ENCODE measurements at regions of chr15 and their contacts with region 1.

Region 1: GRCh38 chr15:64067564-64068030 is 21.3 kb upstream of the DAPK2 start:
- DNase-seq: peak; percentile 84
- ATAC-seq: peak; percentile 91
- H3K4me3 Mint-ChIP-seq: peak overlapping the region; percentile 27; the same call in 1 of the 2 replicates
- H3K27ac Mint-ChIP-seq: no peak overlapping the region
- H3K4me1 Mint-ChIP-seq: 0 out of 2 replicates have a peak, but pooled peaks cover 4% of the 10 kb centered on the region
- H3K27me3 Mint-ChIP-seq: no peaks in the 10 kb centered on the region; the same call in 1 of the 2 replicates
- CTCF ChIP-seq: peak; percentile 64

Region 2: GRCh38 chr15:63466378-63467192 is 601.0 kb before region 1 on chr15:
- CTCF ChIA-PET with region 1: interaction called, 11 read pairs
- POLR2A ChIA-PET with region 1: no interaction called
- DNase-seq: peak; percentile 34
- ATAC-seq: peak; percentile 93
- H3K4me3 Mint-ChIP-seq: no peak overlapping the region
- H3K27ac Mint-ChIP-seq: no peak overlapping the region
- H3K4me1 Mint-ChIP-seq: peaks cover 5% of the 10 kb centered on the region
- H3K27me3 Mint-ChIP-seq: peaks cover 3% of the 10 kb centered on the region
- CTCF ChIP-seq: peak; percentile 34

Region 3: GRCh38 chr15:63610200-63610841 is 457.3 kb before region 1 on chr15:
- CTCF ChIA-PET with region 1: interaction called, 24 read pairs
- POLR2A ChIA-PET with region 1: no interaction called
- DNase-seq: peak; percentile 78
- ATAC-seq: peak; percentile 95
- H3K4me3 Mint-ChIP-seq: no peak overlapping the region
- H3K27ac Mint-ChIP-seq: peak overlapping the region; percentile 31; the same call in 1 of the 2 replicates
- H3K4me1 Mint-ChIP-seq: 0 out of 2 replicates have a peak, but pooled peaks cover 4% of the 10 kb centered on the region
- H3K27me3 Mint-ChIP-seq: no peaks in the 10 kb centered on the region
- CTCF ChIP-seq: peak; percentile 56

Region 4: GRCh38 chr15:64024172-64025050 is 43.2 kb before region 1 on chr15:
- CTCF ChIA-PET with region 1: interaction called, 12 read pairs
- POLR2A ChIA-PET with region 1: no interaction called
- DNase-seq: peak; percentile 29
- ATAC-seq: peak; percentile 73
- H3K4me3 Mint-ChIP-seq: no peak overlapping the region
- H3K27ac Mint-ChIP-seq: no peak overlapping the region
- H3K4me1 Mint-ChIP-seq: peaks cover 16% of the 10 kb centered on the region
- H3K27me3 Mint-ChIP-seq: no peaks in the 10 kb centered on the region
- CTCF ChIP-seq: no peak

Region 5: DNA sequence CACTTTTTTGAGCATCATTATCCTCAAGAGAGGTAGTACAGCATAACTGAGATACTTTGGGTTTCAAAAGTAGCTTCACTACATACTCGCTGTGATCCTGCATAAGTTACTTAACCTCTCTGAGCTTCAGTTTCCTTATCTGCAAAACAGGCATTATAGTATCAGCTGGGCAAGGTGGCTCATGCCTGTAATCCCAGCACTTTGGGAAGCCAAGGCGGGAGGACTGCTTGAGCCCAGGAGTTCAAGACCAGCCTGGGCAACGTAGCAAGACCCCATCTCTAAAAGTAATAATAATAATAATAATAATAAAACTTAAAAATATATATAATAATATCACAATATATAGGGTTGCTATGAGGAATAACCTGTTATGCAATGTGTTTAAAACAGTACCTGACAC is 15.2 kb after region 1 on chr15:
- CTCF ChIA-PET with region 1: interaction called, 10 read pairs
- POLR2A ChIA-PET with region 1: no interaction called
- DNase-seq: no peak
- ATAC-seq: no peak
- H3K4me3 Mint-ChIP-seq: no peak overlapping the region
- H3K27ac Mint-ChIP-seq: no peak overlapping the region
- H3K4me1 Mint-ChIP-seq: no peaks in the 10 kb centered on the region
- H3K27me3 Mint-ChIP-seq: no peaks in the 10 kb centered on the region
- CTCF ChIP-seq: no peak

Region 6: DNA sequence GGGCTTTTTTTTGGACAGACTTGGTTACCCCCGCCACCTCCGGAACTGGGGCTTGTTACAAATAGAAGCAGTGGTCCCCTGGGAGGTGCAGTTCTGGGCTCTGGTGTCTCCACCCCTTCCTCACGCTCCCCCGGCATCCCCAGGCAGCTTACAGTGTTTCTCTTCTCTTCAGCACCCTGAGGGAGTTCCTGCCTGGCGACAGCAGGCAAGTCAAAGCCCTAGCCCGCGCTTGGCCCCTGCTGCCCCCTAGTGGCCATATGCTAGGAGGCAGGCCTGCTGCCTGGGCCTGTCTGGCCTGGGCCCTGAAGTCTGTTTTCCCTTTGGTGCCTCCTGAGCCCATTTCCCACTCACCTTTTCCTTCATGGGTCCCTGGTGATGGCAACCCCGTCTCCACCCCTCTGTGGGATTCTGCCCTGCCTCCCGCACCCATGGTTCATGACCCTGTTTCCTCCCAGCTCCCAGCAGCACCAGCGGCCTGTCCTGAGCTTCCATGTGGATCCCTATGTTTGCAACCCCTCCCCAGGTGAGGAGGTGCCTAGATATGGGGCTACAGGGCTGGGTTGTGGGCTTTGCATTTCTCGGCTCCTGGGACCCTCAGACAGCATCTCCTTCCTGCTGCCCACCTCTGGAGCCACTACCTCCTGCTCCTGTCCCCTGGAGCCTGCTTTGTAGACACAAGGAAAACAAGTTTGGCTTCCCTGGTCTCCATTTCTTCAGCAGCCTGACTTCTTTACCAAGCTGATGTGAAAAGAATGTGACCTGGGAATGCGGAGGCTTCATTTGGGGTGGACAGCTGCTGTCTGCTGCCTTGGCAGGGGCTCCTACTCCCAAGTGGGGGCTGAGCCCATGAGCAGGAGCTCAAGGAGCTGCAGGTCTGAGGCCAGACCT is 86.1 kb after region 1 on chr15:
- CTCF ChIA-PET with region 1: interaction called, 10 read pairs
- POLR2A ChIA-PET with region 1: no interaction called
- DNase-seq: peak; percentile 96
- ATAC-seq: peak; percentile 69
- H3K4me3 Mint-ChIP-seq: peak overlapping the region; percentile 75
- H3K27ac Mint-ChIP-seq: no peak overlapping the region
- H3K4me1 Mint-ChIP-seq: peaks cover 19% of the 10 kb centered on the region
- H3K27me3 Mint-ChIP-seq: peaks cover 32% of the 10 kb centered on the region
- CTCF ChIP-seq: peak; percentile 96